Right ventricle myocardium inferior (tissue), 1 donor: ENCODE measurements at regions of chr15 and their contacts with region 1.

Region 1: DNA sequence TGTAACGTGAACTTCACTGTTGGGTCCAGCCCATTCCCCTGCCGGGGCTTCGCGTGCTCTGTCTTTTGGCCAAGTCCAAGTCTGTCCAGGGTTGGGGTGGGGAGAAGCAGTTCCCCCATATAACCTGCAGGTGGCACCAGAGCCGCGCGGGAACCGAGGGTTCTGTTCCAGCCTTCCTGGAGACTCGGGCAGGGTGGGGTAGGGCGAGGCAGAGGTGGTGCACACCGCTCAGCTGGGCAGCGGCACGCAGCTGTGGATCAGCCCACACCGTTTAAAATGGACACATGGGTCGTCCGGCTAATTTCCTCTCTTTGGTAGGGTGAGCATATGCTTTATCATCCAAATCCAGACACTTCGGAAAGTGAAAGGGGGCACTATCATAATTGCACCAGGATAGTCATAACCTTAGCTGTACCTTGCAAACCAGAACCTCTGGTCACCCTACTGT is 118.1 kb downstream of the TBC1D2B start:
- DNase-seq: peak; percentile 92
- ATAC-seq: peak; percentile 98

Region 2: DNA sequence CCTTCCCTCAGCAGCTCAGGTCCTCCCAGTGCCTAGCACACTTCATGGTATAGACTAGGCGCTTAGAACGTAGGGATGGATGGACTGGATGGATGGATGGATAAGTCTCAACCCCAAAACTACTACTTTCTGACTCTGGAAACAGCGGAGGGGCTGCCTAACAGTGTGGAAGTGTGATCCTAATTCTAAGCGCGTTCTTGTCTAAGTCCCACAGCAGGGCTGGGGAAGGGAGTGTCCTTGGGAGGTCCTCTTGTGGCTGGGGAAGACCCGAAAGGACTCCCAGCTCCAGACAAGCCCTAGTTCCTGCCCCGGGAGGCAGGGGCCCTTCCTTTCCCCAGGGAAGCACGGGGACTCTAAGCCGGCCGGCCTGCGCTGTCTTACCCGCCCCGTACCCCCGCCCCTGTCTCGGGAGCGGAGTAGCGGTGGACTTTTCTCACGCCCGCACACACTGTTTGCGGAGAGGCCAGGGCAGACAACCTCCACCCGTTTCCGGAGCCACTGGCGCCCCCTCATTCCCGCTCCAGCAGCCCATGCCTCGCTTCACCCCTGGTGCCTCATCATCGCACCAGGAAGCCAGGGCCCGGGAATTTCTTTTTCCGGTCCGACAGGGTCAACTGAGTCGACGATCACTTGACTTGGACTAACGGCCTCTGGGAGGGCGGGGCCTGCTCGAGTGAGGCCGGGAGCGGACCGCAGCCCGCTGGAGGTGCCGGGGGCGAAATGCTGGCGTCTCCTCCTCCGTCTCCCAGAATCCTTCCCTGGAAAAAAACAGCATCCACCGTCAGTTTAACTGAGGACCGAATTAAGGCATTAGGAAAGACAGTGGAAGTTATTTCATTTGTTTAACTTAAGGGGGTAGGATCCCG is 15.2 kb before region 1 on chr15:
- intact Hi-C with region 1: no loop called
- DNase-seq: peak; percentile 93
- ATAC-seq: peak; percentile 95

Region 3: DNA sequence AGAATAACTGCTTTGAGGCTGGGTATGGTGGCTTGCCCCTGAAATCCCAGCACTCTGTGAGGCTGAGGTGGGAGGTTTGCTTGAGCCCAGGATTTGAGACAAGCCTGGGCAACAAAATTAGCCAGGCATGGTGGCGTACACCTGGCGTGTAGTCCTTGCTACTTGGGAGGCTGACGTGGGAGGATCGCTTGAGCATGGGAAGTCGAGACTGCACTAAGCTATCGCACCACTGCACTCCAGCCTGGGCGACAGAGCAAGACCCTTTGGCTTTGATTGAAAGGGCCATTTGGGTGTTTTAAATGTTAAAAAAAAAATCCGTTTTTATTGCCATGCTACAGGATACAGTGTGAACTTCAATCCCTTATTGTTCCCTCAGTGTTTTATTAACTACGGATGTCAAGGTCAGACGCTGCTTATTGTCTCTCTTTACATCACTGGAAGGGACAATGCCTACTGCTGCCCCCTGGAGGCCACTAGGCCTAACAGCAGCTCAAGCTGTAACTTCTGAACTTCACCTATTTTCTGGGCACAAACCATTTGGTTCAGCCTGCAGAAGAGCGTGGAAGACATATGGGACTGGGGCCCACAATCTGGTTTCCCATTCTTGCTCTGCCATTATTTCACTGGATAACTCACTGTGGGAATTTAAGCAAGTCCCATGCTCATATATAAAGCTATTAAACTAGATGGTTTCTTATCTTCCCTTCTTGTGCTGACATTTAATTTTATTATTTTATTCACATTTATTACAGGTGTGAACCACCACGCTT is 463.3 kb after region 1 on chr15:
- intact Hi-C with region 1: loop called (anchors 5 kb)
- DNase-seq: peak; percentile 76
- ATAC-seq: peak; percentile 54